ENCODE measurements at regions of chr1 and their contacts with region 1.

Region 1: DNA sequence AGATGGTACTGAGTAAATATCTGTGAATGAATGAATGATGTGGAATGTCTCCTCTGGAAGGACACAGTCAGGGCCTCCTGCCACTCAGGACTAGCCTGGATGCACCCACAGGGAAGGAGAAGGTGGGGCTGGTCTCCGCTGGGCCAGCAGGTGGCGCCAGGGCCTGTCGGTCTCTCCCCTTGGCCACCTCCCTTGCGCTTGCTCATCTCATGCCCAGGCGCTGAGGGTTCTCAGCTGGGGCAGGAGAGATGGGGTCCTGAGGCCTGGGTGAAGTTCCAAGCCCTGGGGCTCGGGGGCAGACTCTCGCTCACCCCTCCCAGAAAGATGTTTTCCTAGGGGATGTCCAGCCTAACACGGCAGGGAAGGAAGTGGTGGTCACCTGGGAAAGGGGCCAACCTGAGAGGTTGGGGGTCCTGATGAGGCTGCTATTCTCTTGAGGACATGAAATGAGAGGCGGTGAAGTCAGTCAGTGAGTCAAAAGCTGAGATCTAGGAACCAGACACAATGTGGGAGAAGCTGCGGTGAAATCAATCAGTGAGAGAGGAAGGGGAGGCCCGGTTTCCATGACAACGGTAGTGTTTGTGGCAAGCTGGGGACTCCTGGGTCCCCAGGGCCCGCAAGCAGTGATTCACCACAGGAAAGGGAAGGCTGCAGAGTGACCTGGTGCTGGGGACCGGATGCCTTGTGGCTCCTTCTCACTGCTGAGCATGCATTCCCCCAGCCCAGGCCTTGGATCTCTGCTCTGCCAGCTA is 14.6 kb upstream of the MEX3A start:
- DNase-seq: peak; percentile 96
- ATAC-seq: peak; percentile 76
- H3K4me3 Mint-ChIP-seq: peak overlapping the region; percentile 60
- H3K27ac Mint-ChIP-seq: peak overlapping the region; percentile 94
- H3K4me1 Mint-ChIP-seq: peaks cover 58% of the 10 kb centered on the region
- H3K27me3 Mint-ChIP-seq: peaks cover 7% of the 10 kb centered on the region

Region 2: GRCh38 chr1:156070548-156070947 is 26.3 kb before region 1 on chr1:
- CTCF ChIA-PET with region 1: no interaction called
- POLR2A ChIA-PET with region 1: no interaction called
- intact Hi-C with region 1: no loop called
- DNase-seq: no peak
- ATAC-seq: no peak
- H3K4me3 Mint-ChIP-seq: no peak overlapping the region
- H3K27ac Mint-ChIP-seq: no peak overlapping the region
- H3K4me1 Mint-ChIP-seq: peaks cover 4% of the 10 kb centered on the region
- H3K27me3 Mint-ChIP-seq: no peaks in the 10 kb centered on the region

Region 3: DNA sequence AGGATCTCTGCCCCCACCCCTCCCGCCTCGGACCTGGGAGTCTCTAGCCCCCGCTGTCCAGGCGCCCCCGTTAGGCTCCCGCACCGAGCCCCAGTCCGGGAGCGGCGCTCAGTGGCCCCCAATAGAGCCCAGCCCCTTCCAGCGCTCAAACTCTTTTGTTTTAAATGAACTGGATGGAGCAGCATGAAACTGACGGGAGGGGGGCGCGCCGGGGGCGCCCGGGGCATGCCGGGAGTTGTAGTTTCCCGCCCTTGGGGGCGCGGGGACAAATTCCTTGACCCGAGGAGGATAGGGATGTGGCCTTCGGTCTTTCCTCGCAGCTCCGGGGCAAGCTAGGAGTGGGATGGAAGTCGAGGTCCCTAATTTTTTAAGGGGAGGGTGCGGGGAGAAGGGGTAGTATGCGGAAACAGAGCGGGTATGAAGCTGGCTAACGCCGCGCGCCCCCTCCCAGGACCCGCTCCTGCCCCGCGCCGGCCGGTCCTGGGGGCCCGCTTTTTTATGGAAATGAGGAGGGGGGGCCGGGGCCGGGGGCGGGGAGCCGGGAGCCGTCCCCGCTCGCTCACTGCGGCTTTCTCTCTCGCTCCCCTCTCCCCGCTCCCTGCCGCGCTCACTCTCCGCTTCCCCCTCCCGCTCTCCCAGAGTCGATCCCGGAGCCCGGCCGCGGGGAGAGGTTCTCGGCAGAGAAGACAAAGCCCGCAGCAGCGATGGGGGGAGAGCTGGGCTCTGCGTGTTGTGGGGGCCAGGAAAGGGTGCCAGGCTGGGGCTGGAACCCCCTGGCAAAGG is 14.3 kb before region 1 on chr1 and contains the start of gene MEX3A:
- CTCF ChIA-PET with region 1: interaction called, 17 read pairs
- POLR2A ChIA-PET with region 1: interaction called, 3 read pairs
- intact Hi-C with region 1: no loop called
- DNase-seq: peak; percentile 80
- ATAC-seq: peak; percentile 89
- H3K4me3 Mint-ChIP-seq: peak within 1 kb of the TSS; percentile 72
- H3K27ac Mint-ChIP-seq: no peak within 1 kb of the TSS
- H3K4me1 Mint-ChIP-seq: peaks cover 5% of the 10 kb centered on the region
- H3K27me3 Mint-ChIP-seq: peaks cover 26% of the 10 kb centered on the region
- total RNA-seq, gene MEX3A: 0.48 to 0.79 TPM

Region 4: DNA sequence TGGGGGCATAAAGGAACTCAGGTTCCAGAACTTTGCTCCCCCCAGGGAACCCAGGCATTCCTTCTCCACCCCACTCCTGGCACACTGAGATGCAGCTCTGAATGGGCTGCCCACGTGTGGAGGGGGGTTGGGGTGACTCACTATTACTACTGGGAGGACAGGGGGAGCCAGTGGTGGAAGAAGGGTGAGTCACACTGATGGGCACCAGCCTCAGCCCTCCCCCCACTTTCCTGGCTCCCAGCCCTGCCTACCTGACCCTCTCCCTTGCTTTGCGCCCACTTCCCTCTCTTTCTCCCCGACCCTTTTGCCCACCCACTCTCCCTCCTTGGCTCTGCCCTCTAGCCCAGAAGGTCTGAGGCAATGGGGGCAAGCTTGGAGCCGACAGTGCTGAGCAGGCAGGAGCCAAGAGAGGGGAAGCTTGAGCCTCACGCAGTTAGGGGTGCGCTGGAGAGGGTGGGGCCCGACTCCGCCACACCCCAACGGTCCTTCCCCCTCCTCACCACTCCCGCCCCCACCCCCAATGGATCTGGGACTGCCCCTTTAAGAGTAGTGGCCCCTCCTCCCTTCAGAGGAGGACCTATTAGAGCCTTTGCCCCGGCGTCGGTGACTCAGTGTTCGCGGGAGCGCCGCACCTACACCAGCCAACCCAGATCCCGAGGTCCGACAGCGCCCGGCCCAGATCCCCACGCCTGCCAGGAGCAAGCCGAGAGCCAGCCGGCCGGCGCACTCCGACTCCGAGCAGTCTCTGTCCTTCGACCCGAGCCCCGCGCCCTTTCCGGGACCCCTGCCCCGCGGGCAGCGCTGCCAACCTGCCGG is 17.5 kb after region 1 on chr1 and contains the start of gene LMNA:
- CTCF ChIA-PET with region 1: interaction called, 929 read pairs
- POLR2A ChIA-PET with region 1: interaction called, 25 read pairs
- intact Hi-C with region 1: loop called (anchors 1 to 2 kb)
- DNase-seq: peak; percentile 90
- ATAC-seq: peak; percentile 91
- H3K4me3 Mint-ChIP-seq: peak within 1 kb of the TSS; percentile 93
- H3K27ac Mint-ChIP-seq: peak within 1 kb of the TSS; percentile 83
- H3K4me1 Mint-ChIP-seq: peaks cover 26% of the 10 kb centered on the region
- H3K27me3 Mint-ChIP-seq: peaks cover 19% of the 10 kb centered on the region
- total RNA-seq, gene LMNA: 184 to 218 TPM

Region 5: DNA sequence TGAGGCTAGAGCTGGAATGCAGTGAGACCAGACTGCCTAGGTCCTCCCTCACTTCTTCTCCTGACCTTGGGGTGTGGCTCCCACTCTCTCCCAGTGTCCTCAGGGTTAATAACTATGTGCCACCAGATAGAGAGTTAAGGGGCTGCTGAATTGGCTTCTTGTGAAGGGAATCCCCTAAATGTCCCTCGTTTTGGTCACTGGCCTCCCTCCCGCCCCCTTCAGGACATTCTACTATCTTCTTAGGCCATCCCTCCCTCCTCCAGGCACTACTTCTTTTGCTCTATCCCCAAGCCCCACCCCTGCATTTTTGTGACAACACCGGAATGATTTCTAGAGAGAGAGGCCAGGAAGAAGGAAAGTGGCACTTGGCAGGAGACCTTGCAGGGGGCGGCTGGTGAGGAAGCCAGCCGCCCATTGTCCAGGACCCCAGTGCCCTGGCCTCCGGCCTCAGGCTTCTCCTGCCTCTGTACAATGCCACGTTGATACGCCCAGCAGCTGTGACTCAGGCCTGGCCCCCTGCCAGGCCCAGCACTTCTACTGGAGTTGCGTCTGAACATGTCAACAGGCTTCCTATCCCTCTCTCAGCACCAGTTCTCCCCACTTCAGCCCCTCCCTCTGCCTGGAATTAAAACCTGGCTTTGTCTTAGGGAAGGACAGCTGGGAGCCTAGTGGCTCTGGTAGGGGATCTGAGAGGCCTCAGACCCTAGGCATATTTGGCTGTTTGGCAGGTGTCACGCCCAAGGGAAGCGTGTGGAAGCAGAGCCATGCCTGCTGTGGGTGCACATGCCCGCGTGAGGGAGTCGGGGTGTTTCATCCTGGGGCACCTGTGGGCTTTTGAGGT is 26.8 kb after region 1 on chr1:
- CTCF ChIA-PET with region 1: interaction called, 929 read pairs
- POLR2A ChIA-PET with region 1: interaction called, 103 read pairs
- intact Hi-C with region 1: loop called (anchors 1 kb)
- DNase-seq: peak; percentile 87
- ATAC-seq: peak; percentile 27
- H3K4me3 Mint-ChIP-seq: peak overlapping the region; percentile 8
- H3K27ac Mint-ChIP-seq: peak overlapping the region; percentile 77
- H3K4me1 Mint-ChIP-seq: peaks cover 70% of the 10 kb centered on the region
- H3K27me3 Mint-ChIP-seq: no peaks in the 10 kb centered on the region

Region 6: GRCh38 chr1:156346636-156347035 is 249.8 kb after region 1 on chr1:
- CTCF ChIA-PET with region 1: no interaction called
- POLR2A ChIA-PET with region 1: no interaction called
- intact Hi-C with region 1: no loop called
- DNase-seq: no peak
- ATAC-seq: no peak
- H3K4me3 Mint-ChIP-seq: no peak overlapping the region
- H3K27ac Mint-ChIP-seq: no peak overlapping the region
- H3K4me1 Mint-ChIP-seq: no peaks in the 10 kb centered on the region
- H3K27me3 Mint-ChIP-seq: peaks cover 7% of the 10 kb centered on the region

Measured in activated CD4-positive, alpha-beta T cell treated with anti-CD3 and anti-CD28 coated beads for 36 hours (primary cell).